ENCODE measurements at regions of chr12 and their contacts with region 1.

Region 1: GRCh38 chr12:78086553-78087362 is 256.1 kb downstream of the NAV3 start:
- DNase-seq: peak; percentile 24
- H3K4me3 ChIP-seq: no peak overlapping the region
- H3K27ac ChIP-seq: no peak overlapping the region
- H3K4me1 ChIP-seq: peaks cover 5% of the 10 kb centered on the region
- H3K27me3 ChIP-seq: no peaks in the 10 kb centered on the region
- CTCF ChIP-seq: peak in 1 of 2 donors; percentile 12
- POLR2A ChIP-seq: no peak

Region 2: GRCh38 chr12:77560714-77561113 is 526.0 kb before region 1 on chr12:
- CTCF ChIA-PET with region 1: no interaction called
- POLR2A ChIA-PET with region 1: no interaction called
- dilution Hi-C with region 1: no loop called
- intact Hi-C with region 1: no loop called
- DNase-seq: no peak
- H3K4me3 ChIP-seq: no peak overlapping the region
- H3K27ac ChIP-seq: no peak overlapping the region
- H3K4me1 ChIP-seq: no peaks in the 10 kb centered on the region
- H3K27me3 ChIP-seq: peaks cover 0 to 2% of the 10 kb centered on the region in 2 experiments
- CTCF ChIP-seq: no peak
- POLR2A ChIP-seq: no peak

Region 3: GRCh38 chr12:78096909-78097597 is 10.3 kb after region 1 on chr12:
- CTCF ChIA-PET with region 1: interaction called, 11 read pairs
- POLR2A ChIA-PET with region 1: no interaction called
- dilution Hi-C with region 1: no loop called
- intact Hi-C with region 1: no loop called
- DNase-seq: peak; percentile 19
- H3K4me3 ChIP-seq: no peak overlapping the region
- H3K27ac ChIP-seq: no peak overlapping the region
- H3K4me1 ChIP-seq: no peaks in the 10 kb centered on the region
- H3K27me3 ChIP-seq: no peaks in the 10 kb centered on the region
- CTCF ChIP-seq: no peak
- POLR2A ChIP-seq: no peak

Measured in endothelial cell of umbilical vein (primary cell).